Activated CD4-positive, alpha-beta memory T cell treated with anti-CD3 and anti-CD28 coated beads for 36 hours (primary cell): ENCODE measurements at regions of chr4 and their contacts with region 1.

Region 1: GRCh38 chr4:41934815-41935651 is at the start of gene TMEM33:
- DNase-seq: peak; percentile 82
- H3K4me3 Mint-ChIP-seq: peak within 1 kb of the TSS; percentile 91
- H3K27ac Mint-ChIP-seq: peak within 1 kb of the TSS; percentile 62
- H3K4me1 Mint-ChIP-seq: peaks cover 41% of the 10 kb centered on the region
- H3K27me3 Mint-ChIP-seq: no peaks in the 10 kb centered on the region
- total RNA-seq, gene TMEM33: 40.7 to 44.8 TPM

Region 2: DNA sequence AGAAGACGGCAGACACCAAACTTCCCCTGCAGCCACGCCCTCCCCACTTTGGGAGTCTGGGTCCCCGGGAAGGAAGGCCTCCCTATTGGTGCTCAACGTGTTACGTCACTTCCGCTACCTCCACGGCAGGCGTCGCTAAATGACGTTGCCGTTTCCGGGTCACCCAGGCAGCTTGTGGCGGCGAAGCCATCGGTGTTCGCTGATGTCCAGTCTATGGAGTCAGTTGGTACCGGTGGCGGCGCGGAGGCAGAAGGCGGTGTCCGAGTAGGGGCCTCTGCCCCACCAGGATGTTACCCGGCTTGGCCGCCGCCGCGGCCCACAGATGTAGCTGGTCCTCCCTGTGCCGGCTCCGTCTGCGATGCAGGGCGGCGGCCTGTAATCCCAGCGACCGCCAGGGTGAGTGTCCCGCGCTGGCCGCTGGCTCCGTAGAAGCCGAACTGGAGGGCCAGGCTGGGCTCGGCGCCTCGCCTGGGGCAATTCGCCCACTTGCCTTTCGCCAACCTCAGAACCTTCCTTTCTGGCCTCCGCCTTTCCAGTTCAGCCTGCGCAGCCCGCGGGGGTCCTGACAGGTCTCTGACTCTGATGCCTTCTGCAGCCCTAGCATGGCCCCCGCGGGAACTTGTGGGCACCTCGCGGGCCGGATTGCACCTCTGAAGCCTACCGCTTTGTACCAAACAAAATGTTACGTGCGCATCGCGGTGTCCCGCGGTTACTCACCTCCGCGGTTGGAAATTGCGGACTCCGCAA is 55.5 kb after region 1 on chr4 and contains the start of gene SLC30A9:
- CTCF ChIA-PET with region 1: no interaction called
- POLR2A ChIA-PET with region 1: interaction called, 10 read pairs
- intact Hi-C with region 1: loop called (anchors 1 kb)
- DNase-seq: peak; percentile 96
- H3K4me3 Mint-ChIP-seq: peak within 1 kb of the TSS; percentile 98
- H3K27ac Mint-ChIP-seq: peak within 1 kb of the TSS; percentile 89
- H3K4me1 Mint-ChIP-seq: peaks cover 28% of the 10 kb centered on the region
- H3K27me3 Mint-ChIP-seq: no peaks in the 10 kb centered on the region
- total RNA-seq, gene SLC30A9: 43.3 to 48.3 TPM